Right ventricle myocardium superior (tissue), 1 donor: ENCODE measurements at regions of chr7 and their contacts with region 1.

Region 1: DNA sequence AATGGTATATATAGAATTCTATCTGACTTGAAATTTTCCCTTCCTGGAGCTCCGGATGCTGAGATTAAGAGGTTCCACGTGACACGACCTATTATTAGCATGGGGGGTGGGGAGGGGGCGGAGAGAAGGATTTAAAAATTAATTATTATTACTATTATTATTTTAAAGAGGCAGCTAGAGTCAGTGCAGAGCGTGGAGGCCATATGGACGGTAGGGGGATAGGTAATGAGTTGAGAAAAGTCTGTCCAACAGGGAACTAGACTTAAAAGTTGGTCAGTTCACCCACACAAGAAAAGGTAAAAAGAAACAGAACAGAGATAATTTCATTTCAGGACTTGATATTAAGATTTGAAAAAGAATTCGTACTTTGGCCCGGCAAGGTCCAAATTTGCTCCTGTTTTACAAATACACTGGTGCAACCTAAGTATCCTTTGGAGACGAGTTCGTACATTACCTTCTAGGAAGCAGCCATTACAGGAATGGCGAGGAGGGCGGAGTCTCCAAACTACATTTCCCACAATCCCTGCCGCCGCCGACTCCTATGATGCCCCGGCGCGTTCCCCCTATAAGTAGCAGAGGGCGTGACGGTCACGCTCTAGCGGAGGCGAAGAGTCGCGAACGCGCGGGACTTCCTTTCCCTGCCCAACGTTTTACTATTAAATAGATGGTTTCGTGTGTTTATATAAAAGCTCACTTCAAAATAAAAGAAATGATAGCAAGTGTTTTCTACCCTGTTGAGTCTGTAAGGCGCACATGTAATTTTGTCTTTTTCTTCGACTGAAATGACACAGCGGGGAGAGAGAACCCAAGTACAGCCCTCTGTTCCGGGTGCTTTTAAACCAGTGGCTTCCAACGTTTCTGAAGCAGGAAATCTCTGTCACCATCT is at the start of gene SMIM30:
- DNase-seq: peak; percentile 95
- ATAC-seq: peak; percentile 100
- total RNA-seq, gene SMIM30: 118 TPM

Region 2: DNA sequence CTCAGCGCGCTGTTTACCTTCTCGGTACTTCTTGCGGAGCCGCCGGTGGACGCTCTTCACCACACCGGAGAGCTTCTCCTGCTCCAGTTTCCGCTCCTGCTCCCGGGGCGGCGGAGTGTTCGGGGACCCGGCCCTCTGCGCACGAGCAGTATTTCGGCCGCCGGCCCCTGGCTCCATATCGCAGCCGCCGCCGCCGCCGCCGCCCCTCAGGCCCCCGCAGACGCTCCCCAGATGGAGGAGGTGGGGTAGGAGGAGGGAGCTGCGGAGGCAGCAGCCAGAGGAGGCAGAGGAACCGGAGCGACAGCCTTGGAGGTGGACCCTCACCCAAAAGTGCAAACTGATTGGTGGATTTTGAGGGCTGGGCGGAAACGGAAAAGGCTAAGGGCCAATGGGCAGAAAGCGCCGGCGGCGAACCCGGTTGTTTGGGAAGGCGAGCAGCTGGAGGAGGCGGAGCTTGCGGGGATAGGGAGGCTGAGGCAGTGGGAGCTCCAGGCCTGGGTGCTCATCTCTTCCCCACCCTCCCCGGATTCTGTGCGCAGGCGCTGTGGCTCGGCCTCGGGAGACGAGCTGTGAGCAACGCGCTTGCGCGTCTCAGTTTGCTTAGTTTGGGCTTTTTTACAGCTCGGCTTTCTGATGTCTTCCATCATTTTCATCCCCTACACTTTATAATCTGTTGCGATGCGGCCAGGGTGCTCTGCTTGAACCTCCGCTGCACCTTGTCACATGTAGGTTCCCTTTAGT is 178.6 kb before region 1 on chr7:
- intact Hi-C with region 1: loop called (anchors 10 kb)
- DNase-seq: peak; percentile 99
- ATAC-seq: peak; percentile 98

Region 3: GRCh38 chr7:113026941-113027340 is 91.4 kb before region 1 on chr7:
- intact Hi-C with region 1: no loop called
- DNase-seq: no peak
- ATAC-seq: no peak